Colonic mucosa (tissue), 4 donors: ENCODE measurements at regions of chr11 and their contacts with region 1.

Region 1: DNA sequence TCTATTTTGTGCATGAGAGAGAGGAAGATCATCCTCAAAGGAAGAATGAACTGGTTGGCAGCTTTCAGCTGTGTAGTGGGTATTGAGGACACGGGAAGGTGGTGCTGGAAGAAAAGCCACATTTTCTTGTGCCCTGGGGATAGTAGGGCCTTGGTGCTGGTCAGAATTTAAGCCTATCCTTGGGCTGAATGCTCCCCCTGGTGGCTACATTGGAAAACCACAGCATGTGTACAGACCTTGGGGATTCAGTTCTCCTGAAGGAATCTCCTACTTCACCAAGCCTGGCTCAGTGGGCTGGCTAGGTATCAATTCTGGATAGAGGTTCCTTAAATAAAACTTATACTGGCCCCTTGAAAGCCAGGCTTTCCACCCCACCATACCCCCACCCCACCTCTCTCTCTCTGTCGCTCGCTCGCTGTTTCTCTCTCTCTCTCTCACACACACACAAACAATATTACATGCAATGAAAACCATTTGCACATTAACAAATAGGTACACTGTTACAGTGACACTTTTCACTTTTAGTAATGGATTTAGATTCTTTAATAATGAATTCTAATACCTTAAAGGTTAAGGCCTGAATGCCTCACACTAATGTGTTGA is 2.8 kb upstream of the OR51M1 start:
- DNase-seq: peak; percentile 48
- H3K4me3 ChIP-seq: no peak overlapping the region
- H3K27ac ChIP-seq: no peak overlapping the region
- H3K4me1 ChIP-seq: no peaks in the 10 kb centered on the region
- H3K27me3 ChIP-seq: no peaks in the 10 kb centered on the region
- CTCF ChIP-seq: peak; percentile 48

Region 2: DNA sequence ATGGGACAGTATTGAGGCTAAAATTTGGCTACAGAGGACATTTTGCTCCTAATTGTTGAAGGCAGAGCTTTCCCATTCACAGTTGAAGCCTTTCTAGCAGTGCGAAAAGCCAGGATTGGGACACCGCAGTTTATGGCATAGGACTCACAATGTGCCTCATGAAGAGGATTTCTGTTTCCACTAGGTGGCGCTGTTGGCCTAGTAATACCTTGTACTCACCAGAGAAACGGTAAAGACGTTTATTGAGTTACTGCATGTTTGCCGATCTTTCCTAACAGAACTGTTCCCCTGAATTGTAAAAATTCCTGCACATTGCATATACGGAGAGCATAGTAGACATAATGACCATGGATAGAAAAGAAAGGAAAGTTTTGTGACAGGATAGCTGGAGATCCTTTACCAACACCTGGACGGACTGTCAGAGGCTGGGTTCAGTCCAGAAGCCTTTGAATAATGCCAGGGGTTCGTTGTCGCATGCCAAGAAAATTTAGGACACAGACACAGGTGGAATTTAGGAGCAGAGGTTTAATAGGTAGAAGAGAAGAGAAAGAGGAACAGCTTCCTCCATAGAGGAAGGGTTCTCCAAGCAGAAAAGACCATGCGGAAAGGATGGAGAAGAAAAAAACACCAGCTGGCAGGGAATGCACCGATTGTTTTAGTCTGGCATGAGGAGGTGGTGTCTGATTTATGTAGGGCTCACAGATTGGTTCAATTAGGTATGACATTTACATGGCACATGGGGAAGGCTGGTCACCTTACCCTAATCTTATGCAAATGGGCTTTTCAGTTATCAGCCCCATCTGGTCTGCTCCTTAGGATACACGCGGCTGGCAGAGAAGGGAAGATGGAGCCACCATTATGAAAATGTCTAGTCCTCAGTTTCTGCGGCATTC is 754.4 kb before region 1 on chr11:
- intact Hi-C with region 1: loop called (anchors 5 kb)
- DNase-seq: peak; percentile 83
- H3K4me3 ChIP-seq: no peak overlapping the region
- H3K27ac ChIP-seq: no peak overlapping the region
- H3K4me1 ChIP-seq: no peaks in the 10 kb centered on the region
- H3K27me3 ChIP-seq: no peaks in the 10 kb centered on the region
- CTCF ChIP-seq: peak; percentile 62

Region 3: GRCh38 chr11:5123802-5124521 is 256.9 kb before region 1 on chr11:
- intact Hi-C with region 1: loop called (anchors 10 kb)
- DNase-seq: peak; percentile 65
- H3K4me3 ChIP-seq: no peak overlapping the region
- H3K27ac ChIP-seq: no peak overlapping the region
- H3K4me1 ChIP-seq: no peaks in the 10 kb centered on the region
- H3K27me3 ChIP-seq: no peaks in the 10 kb centered on the region
- CTCF ChIP-seq: peak; percentile 81